A673 (cell line): ENCODE measurements at regions of chr17 and their contacts with region 1.

Region 1: DNA sequence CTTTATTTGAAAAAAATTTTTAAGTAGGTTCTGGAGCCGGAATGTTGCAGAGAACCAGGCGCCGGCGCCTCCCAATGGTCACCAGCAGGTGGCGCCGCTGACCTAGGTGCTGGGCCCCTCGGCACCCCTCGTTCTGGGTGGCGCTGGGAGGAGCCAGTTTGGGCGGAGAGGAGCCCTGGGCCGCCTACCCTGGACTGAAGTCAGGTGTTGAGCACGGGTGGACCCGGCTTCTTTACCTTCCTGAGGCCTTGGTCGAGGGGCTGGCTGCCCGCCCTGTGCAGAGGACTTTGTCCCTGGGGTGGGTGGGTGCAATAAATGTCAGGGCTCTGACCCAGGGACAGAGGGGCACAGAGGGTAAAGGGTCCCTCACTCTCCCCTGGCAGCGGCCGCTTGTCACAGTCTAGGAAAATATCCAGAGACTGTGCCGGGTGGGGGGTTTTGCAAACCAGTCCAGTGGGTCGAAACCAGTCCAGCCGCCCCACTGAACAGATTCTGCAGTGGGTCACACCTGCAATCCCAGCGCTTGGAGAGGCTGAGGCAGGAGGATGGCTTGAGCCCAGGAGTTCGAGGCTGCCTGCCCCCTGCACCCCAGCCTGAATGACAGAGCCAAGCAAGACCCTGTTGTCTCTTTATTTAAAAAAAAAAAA is 30.1 kb upstream of the TNFRSF13B start:
- DNase-seq: peak; percentile 85
- H3K4me3 ChIP-seq: no peak overlapping the region
- H3K27ac ChIP-seq: no peak overlapping the region
- H3K4me1 ChIP-seq: peaks cover 6% of the 10 kb centered on the region
- H3K27me3 ChIP-seq: no peaks in the 10 kb centered on the region
- CTCF ChIP-seq: peak; percentile 95

Region 2: DNA sequence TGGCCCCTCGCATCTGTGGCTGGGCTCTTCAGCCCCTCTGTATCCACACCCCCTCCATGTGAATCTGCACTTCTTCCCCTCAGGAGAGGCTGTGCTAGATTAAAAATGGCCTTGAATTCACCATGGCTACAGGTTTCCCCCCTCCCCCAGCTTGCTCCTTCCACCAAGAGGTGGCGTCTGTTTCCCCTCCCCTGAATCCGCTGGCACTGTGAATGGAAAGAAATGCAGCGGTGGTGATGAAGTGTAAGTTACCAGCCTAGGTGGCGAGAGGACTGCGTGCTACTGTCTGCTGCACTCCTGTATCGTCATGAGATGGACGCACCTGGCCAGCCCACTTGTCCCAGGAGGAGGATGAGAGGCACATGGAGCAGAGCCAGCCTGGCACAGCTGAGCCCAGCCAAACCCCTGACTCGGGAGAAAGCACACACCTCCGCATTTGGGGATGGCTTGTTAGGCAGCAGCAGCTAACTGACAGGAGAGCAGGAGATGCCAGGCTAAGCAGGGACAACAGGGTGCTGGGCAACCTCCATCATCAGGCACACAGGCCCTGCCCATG is 56.3 kb before region 1 on chr17:
- CTCF ChIA-PET with region 1: no interaction called
- POLR2A ChIA-PET with region 1: no interaction called
- intact Hi-C with region 1: no loop called
- DNase-seq: peak; percentile 36
- H3K4me3 ChIP-seq: no peak overlapping the region
- H3K27ac ChIP-seq: no peak overlapping the region
- H3K4me1 ChIP-seq: no peaks in the 10 kb centered on the region
- H3K27me3 ChIP-seq: no peaks in the 10 kb centered on the region
- CTCF ChIP-seq: peak; percentile 38; the same call in 1 of the 2 replicates

Region 3: DNA sequence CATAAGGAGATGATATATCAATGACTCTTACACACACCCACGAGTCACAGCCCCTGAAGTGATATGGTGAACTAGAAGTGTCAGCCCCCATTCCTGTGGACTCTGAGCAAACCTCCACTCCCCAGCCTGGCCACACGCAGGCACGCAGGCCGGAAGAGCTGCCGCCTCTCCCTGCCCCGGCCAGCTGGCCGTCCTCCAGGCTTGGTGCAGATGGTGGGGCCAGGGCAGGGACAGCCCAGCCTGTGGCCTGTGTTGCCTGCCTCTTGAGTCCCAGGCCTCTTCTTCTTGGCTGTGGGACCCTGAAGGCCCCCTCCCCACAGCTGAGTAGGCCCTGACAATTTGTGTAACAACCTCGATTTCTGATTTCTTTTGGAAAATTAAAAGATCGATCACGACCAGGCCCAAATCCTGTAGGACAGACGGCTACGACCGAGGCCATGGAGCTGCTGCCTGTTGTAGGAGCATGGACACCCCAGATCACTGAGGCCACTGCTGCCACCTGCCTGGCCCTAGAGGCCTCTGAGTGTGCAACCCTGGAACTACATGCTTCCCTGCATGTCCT is 30.2 kb after region 1 on chr17:
- CTCF ChIA-PET with region 1: interaction called, 14 read pairs
- POLR2A ChIA-PET with region 1: no interaction called
- intact Hi-C with region 1: no loop called
- DNase-seq: no peak
- H3K4me3 ChIP-seq: no peak overlapping the region
- H3K27ac ChIP-seq: no peak overlapping the region
- H3K4me1 ChIP-seq: peaks cover 14% of the 10 kb centered on the region
- H3K27me3 ChIP-seq: no peaks in the 10 kb centered on the region
- CTCF ChIP-seq: no peak

Region 4: GRCh38 chr17:17042851-17043460 is 41.0 kb after region 1 on chr17:
- CTCF ChIA-PET with region 1: no interaction called
- POLR2A ChIA-PET with region 1: no interaction called
- intact Hi-C with region 1: no loop called
- DNase-seq: no peak
- H3K4me3 ChIP-seq: peak overlapping the region; percentile 88
- H3K27ac ChIP-seq: peak overlapping the region; percentile 75
- H3K4me1 ChIP-seq: peaks cover 30% of the 10 kb centered on the region
- H3K27me3 ChIP-seq: no peaks in the 10 kb centered on the region
- CTCF ChIP-seq: no peak

Region 5: DNA sequence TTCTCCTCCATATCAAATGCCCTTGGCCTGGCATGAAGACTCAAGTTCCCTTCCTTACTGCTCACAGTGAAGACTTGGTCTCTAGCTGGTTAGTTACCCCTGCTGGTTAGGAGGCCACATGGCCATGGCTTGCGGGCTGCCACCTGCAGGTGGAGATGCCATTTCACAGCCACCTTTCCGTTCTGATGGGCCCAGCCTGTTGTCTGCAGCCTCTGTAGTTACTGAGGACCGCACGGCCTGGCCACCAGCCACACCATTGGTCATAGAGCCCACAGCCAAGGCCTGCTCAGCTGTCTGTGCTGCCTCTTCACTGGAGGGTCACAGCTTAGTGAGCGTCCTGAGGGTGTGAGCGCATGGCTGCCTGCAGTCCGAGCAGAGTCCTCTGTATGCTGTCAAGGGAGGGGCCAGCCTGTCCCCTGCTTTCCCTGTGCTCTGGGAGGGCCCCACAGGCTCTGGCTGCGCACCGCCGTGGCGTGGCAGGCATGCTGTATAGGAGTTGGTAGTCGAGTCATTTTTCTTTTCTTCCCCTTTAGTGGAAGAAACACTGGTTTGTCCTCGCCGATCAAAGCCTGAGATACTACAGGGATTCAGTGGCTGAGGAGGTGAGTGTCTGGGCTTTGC is 144.9 kb after region 1 on chr17:
- CTCF ChIA-PET with region 1: no interaction called
- POLR2A ChIA-PET with region 1: no interaction called
- intact Hi-C with region 1: loop called (anchors 5 kb)
- DNase-seq: peak; percentile 18
- H3K4me3 ChIP-seq: no peak overlapping the region
- H3K27ac ChIP-seq: no peak overlapping the region
- H3K4me1 ChIP-seq: peaks cover 8% of the 10 kb centered on the region
- H3K27me3 ChIP-seq: no peaks in the 10 kb centered on the region
- CTCF ChIP-seq: peak; percentile 43

Region 6: GRCh38 chr17:17206124-17206912 is 204.3 kb after region 1 on chr17 and contains the start of gene PLD6:
- CTCF ChIA-PET with region 1: no interaction called
- POLR2A ChIA-PET with region 1: no interaction called
- intact Hi-C with region 1: loop called (anchors 5 kb)
- DNase-seq: peak; percentile 89
- H3K4me3 ChIP-seq: peak within 1 kb of the TSS; percentile 72
- H3K27ac ChIP-seq: peak within 1 kb of the TSS; percentile 88
- H3K4me1 ChIP-seq: peaks cover 18% of the 10 kb centered on the region
- H3K27me3 ChIP-seq: no peaks in the 10 kb centered on the region
- CTCF ChIP-seq: no peak
- total RNA-seq, gene PLD6: 13.4 and 15.5 TPM in 2 replicates